ENCODE measurements at regions of chr12 and their contacts with region 1.

Region 1: DNA sequence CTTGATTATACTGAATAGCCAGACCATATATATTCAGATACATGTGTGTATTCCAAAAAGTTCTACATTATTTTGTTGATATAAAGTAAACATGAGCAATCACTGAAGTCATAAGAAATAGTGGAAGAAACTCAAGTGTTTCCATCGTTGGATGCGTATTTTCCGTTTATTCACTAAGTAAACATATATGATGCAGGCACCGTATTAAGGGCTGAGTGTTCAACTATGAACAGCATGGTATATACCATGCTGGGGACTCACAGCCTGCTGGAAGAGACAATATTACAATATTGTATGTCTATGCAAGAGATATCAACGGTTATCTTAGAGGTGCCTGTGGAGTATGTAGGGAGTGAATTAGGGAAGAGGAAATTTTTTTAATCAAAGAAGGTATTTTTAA is 1.2 kb downstream of the PYROXD1 start:
- DNase-seq: no peak
- ATAC-seq: no peak
- H3K4me3 ChIP-seq: peak overlapping the region in 4 of 5 experiments; percentile 97 to 100 (median 98)
- H3K4me3 Mint-ChIP-seq: peak overlapping the region; percentile 96
- H3K27ac ChIP-seq: peak overlapping the region in 1 of 2 donors; percentile 90
- H3K27ac Mint-ChIP-seq: no peak overlapping the region
- H3K4me1 ChIP-seq: peaks cover 17 to 19% of the 10 kb centered on the region in 2 donors
- H3K4me1 Mint-ChIP-seq: peaks cover 26% of the 10 kb centered on the region
- H3K27me3 ChIP-seq: peaks cover 0 to 2% (median 0%) of the 10 kb centered on the region in 4 experiments
- H3K27me3 Mint-ChIP-seq: peaks cover 5% of the 10 kb centered on the region
- CTCF ChIP-seq: no peak

Region 2: GRCh38 chr12:19439059-19440018 is 1999.3 kb before region 1 on chr12 and contains the start of gene AEBP2:
- CTCF ChIA-PET with region 1: no interaction called
- POLR2A ChIA-PET with region 1: no interaction called
- intact Hi-C with region 1: loop called (anchors 5 kb)
- DNase-seq: peak; percentile 96
- ATAC-seq: peak; percentile 92
- H3K4me3 ChIP-seq: peak within 1 kb of the TSS; percentile 35 to 94 (median 84)
- H3K4me3 Mint-ChIP-seq: peak within 1 kb of the TSS; percentile 98
- H3K27ac ChIP-seq: peak within 1 kb of the TSS; percentile 79 to 94
- H3K27ac Mint-ChIP-seq: peak within 1 kb of the TSS; percentile 97
- H3K4me1 ChIP-seq: peaks cover 16% of the 10 kb centered on the region in 2 donors
- H3K4me1 Mint-ChIP-seq: peaks cover 31% of the 10 kb centered on the region
- H3K27me3 ChIP-seq: no peaks in the 10 kb centered on the region
- H3K27me3 Mint-ChIP-seq: no peaks in the 10 kb centered on the region
- CTCF ChIP-seq: no peak
- total RNA-seq, gene AEBP2: 67.8 and 75.4 TPM in 2 replicates

Region 3: DNA sequence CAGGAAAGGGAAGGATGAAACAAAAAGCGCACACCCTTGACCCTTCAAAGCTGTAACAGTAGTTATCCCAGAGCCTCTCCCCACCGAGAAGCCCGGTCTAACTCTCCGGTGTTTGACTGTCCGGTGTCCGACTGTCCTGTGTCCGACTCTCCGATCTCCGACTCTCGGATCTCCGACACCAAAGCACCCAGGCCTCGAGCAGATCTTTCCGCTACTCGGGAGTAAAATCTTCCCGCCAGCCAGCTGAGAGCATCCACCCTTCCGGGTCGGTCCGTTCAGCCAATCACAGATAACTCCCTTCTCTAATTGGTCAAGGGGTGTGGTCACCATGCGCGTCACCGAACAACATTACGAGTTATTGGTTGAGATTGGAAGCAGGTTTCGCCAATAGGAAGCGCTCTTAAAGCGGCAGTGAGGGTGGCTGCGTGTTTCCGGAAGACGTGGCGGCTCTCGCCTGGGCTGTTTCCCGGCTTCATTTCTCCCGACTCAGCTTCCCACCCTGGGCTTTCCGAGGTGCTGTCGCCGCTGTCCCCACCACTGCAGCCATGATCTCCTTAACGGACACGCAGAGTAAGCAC is 62.8 kb after region 1 on chr12 and contains the starts of genes GOLT1B and RECQL:
- CTCF ChIA-PET with region 1: interaction called, 3 read pairs
- POLR2A ChIA-PET with region 1: interaction called, 4 read pairs
- intact Hi-C with region 1: loop called (anchors 1 kb)
- DNase-seq: peak; percentile 96
- ATAC-seq: peak; percentile 95
- H3K4me3 ChIP-seq: peak within 1 kb of the TSS; percentile 69 to 97 (median 92)
- H3K4me3 Mint-ChIP-seq: no peak within 1 kb of the TSS
- H3K27ac ChIP-seq: peak within 1 kb of the TSS; percentile 70 to 89
- H3K27ac Mint-ChIP-seq: no peak within 1 kb of the TSS
- H3K4me1 ChIP-seq: peaks cover 26 to 28% of the 10 kb centered on the region in 2 donors
- H3K4me1 Mint-ChIP-seq: peaks cover 37% of the 10 kb centered on the region
- H3K27me3 ChIP-seq: no peaks in the 10 kb centered on the region
- H3K27me3 Mint-ChIP-seq: no peaks in the 10 kb centered on the region
- CTCF ChIP-seq: no peak
- total RNA-seq, gene GOLT1B: 25.1 and 26.3 TPM in 2 replicates
- total RNA-seq, gene RECQL: 54.8 and 56.3 TPM in 2 replicates

Region 4: DNA sequence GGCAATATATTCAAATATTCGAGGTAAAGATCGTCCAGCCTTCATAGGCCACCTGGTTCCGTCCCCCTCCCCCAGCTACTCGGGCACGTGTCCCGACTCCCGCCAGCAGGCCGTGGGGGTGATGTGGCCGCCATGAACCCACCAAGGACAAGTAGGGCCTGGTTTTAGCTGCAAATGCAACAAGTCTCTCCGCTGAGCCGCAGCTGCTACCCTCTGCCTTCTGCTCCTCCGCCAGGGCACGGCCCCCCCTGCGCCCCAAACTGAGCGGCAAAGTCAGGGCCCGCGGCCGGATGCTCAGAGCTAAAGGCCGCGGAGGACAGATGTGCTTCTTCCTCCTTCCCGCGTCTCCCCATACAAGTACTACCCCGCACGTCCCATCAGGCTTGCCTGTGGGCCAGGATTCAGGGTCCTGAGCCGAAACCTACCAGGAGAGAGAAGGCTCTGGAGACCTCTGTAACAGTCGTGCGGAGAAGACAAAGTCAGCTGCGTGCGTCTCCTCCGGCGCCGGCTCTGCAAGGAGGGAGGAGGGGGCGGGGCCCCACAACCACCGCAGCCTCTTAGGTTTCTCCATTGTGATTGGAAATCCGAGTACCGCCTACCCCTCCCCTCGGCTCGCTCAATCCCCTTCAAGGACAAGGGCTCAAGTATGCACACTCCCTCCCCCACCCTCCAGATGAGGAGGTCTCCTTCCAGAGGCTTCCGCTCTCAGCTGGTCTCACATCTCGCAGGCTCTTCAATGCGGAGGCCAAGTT is 218.9 kb after region 1 on chr12 and contains the start of gene LDHB:
- CTCF ChIA-PET with region 1: no interaction called
- POLR2A ChIA-PET with region 1: no interaction called
- intact Hi-C with region 1: loop called (anchors 1 kb)
- DNase-seq: peak; percentile 85
- ATAC-seq: peak; percentile 96
- H3K4me3 ChIP-seq: peak within 1 kb of the TSS; percentile 81 to 94 (median 88)
- H3K4me3 Mint-ChIP-seq: peak within 1 kb of the TSS; percentile 93
- H3K27ac ChIP-seq: peak within 1 kb of the TSS; percentile 61 to 68
- H3K27ac Mint-ChIP-seq: peak within 1 kb of the TSS; percentile 97
- H3K4me1 ChIP-seq: peaks cover 8 to 13% of the 10 kb centered on the region in 2 donors
- H3K4me1 Mint-ChIP-seq: peaks cover 30% of the 10 kb centered on the region
- H3K27me3 ChIP-seq: peaks cover 0 to 2% (median 0%) of the 10 kb centered on the region in 4 experiments
- H3K27me3 Mint-ChIP-seq: peaks cover 11% of the 10 kb centered on the region
- CTCF ChIP-seq: no peak
- total RNA-seq, gene LDHB: 161 and 163 TPM in 2 replicates

Region 5: GRCh38 chr12:22046090-22046967 is 607.7 kb after region 1 on chr12 and contains the start of gene CMAS:
- CTCF ChIA-PET with region 1: interaction called, 3 read pairs
- POLR2A ChIA-PET with region 1: no interaction called
- intact Hi-C with region 1: loop called (anchors 2 kb)
- DNase-seq: peak; percentile 77
- ATAC-seq: peak; percentile 89
- H3K4me3 ChIP-seq: peak within 1 kb of the TSS; percentile 48 to 95 (median 93)
- H3K4me3 Mint-ChIP-seq: peak within 1 kb of the TSS; percentile 95
- H3K27ac ChIP-seq: peak within 1 kb of the TSS; percentile 13 to 69
- H3K27ac Mint-ChIP-seq: peak within 1 kb of the TSS; percentile 81
- H3K4me1 ChIP-seq: peaks cover 5 to 6% of the 10 kb centered on the region in 2 donors
- H3K4me1 Mint-ChIP-seq: peaks cover 23% of the 10 kb centered on the region
- H3K27me3 ChIP-seq: no peaks in the 10 kb centered on the region
- H3K27me3 Mint-ChIP-seq: peaks cover 9% of the 10 kb centered on the region
- CTCF ChIP-seq: no peak
- total RNA-seq, gene CMAS: 16.1 and 19.1 TPM in 2 replicates

Region 6: GRCh38 chr12:22164139-22164538 is 725.5 kb after region 1 on chr12:
- CTCF ChIA-PET with region 1: no interaction called
- POLR2A ChIA-PET with region 1: no interaction called
- intact Hi-C with region 1: loop called (anchors 5 kb)
- DNase-seq: peak; percentile 82
- ATAC-seq: peak; percentile 90
- H3K4me3 ChIP-seq: peak overlapping the region in 2 of 5 experiments; percentile 2 to 18
- H3K4me3 Mint-ChIP-seq: peak overlapping the region; percentile 42
- H3K27ac ChIP-seq: peak overlapping the region; percentile 69 to 83
- H3K27ac Mint-ChIP-seq: peak overlapping the region; percentile 64
- H3K4me1 ChIP-seq: peaks cover 27% of the 10 kb centered on the region in 2 donors
- H3K4me1 Mint-ChIP-seq: peaks cover 34% of the 10 kb centered on the region
- H3K27me3 ChIP-seq: no peaks in the 10 kb centered on the region
- H3K27me3 Mint-ChIP-seq: no peaks in the 10 kb centered on the region
- CTCF ChIP-seq: no peak

Measured in B cell (primary cell).